H1 (cell line): ENCODE measurements at regions of chr6 and their contacts with region 1.

Region 1: GRCh38 chr6:3929281-3929798 is 80.2 kb downstream of the FAM50B start:
- DNase-seq: no peak
- H3K4me3 ChIP-seq: no peak overlapping the region
- H3K27ac ChIP-seq: no peak overlapping the region
- H3K4me1 ChIP-seq: no peaks in the 10 kb centered on the region
- H3K27me3 ChIP-seq: no peaks in the 10 kb centered on the region
- CTCF ChIP-seq: no peak
- EP300 ChIP-seq: no peak
- POLR2A ChIP-seq: no peak
- RAD21 ChIP-seq: no peak

Region 2: DNA sequence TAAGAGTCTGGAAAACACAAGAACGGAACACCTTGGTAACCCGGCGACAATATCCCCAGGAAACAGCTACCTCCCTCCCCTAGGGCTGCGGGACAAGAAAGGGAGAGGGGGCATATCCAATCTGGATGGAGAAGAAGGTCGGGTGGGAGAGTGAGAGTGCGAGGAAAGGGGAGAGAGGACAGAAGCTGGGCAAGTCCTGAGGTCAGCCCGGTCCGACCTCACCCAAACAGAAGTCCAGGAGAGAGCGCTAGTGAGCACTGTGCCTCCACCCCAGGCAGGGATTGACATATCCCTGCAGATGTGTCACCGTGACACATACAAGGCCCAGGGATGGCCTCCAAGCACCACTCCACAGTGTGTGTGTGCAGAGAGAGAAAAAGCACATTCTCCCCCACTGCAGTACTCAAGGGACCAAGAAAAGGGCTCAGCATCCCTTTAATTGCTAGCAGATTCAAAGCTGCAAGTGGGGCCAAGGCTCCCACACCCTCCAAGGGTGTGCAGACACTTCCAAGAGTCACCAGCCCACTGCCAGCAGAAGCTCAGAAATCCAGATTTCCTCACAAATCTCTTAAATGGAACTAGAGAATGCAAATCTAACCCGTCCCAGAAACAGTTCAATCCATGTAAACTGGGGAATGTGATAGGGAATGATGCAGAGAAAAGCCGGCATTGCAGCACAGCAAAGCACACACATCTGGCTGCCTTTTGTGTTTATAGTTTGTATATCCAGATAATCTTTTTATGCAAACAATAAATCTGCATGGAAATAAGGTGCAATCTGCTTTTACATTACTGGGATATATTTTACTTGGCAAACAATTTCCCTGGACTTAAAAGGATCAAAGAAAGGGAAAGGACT is 180.9 kb before region 1 on chr6:
- CTCF ChIA-PET with region 1: interaction called, 40 read pairs
- POLR2A ChIA-PET with region 1: no interaction called
- DNase-seq: peak in 1 of 2 experiments; percentile 81
- H3K4me3 ChIP-seq: no peak overlapping the region
- H3K27ac ChIP-seq: no peak overlapping the region
- H3K4me1 ChIP-seq: peaks cover 0 to 14% (median 5%) of the 10 kb centered on the region in 4 experiments; a peak in 5 of 7 replicates
- H3K27me3 ChIP-seq: peaks cover 12 to 45% (median 39%) of the 10 kb centered on the region in 4 experiments
- CTCF ChIP-seq: peak in 2 of 3 experiments; percentile 79 to 92; a peak in 3 of 4 replicates
- EP300 ChIP-seq: no peak
- POLR2A ChIP-seq: no peak
- RAD21 ChIP-seq: peak; percentile 72 to 80

Region 3: DNA sequence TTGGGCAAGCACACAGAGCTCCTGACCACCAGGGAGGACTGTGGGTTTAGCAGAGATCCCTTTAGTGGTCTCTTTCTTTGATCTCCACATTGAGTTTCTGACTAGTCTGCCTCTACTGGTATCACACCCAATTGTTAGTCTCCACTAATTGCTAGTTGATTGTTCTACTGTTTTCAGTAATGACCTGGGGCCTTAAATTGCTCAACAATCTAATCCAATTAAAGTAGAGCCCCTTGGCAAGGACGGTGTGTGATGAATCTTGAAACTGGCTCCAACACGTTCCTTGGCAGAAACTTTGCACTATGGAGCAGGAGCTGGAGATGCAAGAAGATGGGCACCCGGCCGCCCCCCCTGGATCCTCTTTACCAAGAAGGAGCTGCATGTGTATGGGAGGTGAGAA is 67.9 kb before region 1 on chr6:
- CTCF ChIA-PET with region 1: interaction called, 124 read pairs
- POLR2A ChIA-PET with region 1: no interaction called
- DNase-seq: no peak
- H3K4me3 ChIP-seq: no peak overlapping the region
- H3K27ac ChIP-seq: no peak overlapping the region
- H3K4me1 ChIP-seq: peaks cover 0 to 4% (median 0%) of the 10 kb centered on the region in 4 experiments; a peak in 2 of 7 replicates
- H3K27me3 ChIP-seq: no peaks in the 10 kb centered on the region
- CTCF ChIP-seq: no peak
- EP300 ChIP-seq: no peak
- POLR2A ChIP-seq: no peak
- RAD21 ChIP-seq: no peak

Region 4: GRCh38 chr6:3905945-3906845 is 23.1 kb before region 1 on chr6:
- CTCF ChIA-PET with region 1: interaction called, 15 read pairs
- POLR2A ChIA-PET with region 1: no interaction called
- DNase-seq: no peak
- H3K4me3 ChIP-seq: no peak overlapping the region; a peak in 1 of 8 replicates
- H3K27ac ChIP-seq: no peak overlapping the region
- H3K4me1 ChIP-seq: peaks cover 7 to 19% (median 14%) of the 10 kb centered on the region in 4 experiments
- H3K27me3 ChIP-seq: no peaks in the 10 kb centered on the region; a peak in 2 of 7 replicates
- CTCF ChIP-seq: no peak
- EP300 ChIP-seq: no peak
- POLR2A ChIP-seq: no peak
- RAD21 ChIP-seq: no peak

Region 5: DNA sequence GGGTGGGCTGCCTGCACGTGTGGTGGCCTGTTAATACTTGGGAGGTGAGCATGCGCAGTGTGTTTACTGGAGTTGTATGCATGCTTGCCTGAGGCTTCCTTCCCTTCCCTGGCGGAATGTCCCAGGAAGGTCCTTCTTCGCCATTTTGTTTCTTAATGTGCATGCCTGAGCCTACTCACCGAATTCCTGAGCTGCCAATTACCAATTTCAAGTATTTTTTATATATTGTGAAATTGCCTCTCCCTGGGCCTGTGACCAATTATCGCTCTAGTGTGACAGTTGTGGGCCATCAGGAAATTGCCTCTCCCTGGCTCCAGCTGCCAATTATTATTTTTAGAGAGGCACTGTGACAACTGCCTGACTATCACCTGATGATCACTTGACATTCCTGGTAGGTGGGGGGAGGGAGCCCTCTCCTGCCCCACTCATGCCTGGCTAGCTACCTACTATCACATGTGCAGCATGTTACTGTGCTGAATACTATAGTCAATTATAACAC is 10.2 kb before region 1 on chr6:
- CTCF ChIA-PET with region 1: interaction called, 20 read pairs
- POLR2A ChIA-PET with region 1: no interaction called
- DNase-seq: no peak
- H3K4me3 ChIP-seq: no peak overlapping the region
- H3K27ac ChIP-seq: no peak overlapping the region
- H3K4me1 ChIP-seq: peaks cover 0 to 4% (median 0%) of the 10 kb centered on the region in 4 experiments; a peak in 1 of 7 replicates
- H3K27me3 ChIP-seq: no peaks in the 10 kb centered on the region
- CTCF ChIP-seq: no peak
- EP300 ChIP-seq: no peak
- POLR2A ChIP-seq: no peak
- RAD21 ChIP-seq: no peak

Region 6: DNA sequence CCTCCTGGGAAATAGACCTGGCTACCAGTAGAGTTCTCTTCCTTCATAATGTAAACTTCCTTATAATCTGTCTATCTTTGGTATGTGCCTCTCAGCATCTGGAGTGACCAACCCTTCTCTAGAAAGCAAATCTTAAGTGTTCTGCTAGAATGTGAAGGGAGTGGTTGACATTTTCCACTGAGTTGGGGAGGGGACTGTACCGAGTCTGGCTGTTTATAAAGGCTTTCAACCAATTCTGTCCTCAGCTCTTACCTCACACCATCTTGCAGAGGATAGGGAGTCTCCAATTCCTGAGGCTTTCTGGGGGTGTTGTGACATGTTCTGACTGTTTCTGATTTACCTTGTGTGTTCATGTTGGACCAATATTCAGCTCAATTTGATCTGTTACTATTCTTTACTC is 110.0 kb after region 1 on chr6:
- CTCF ChIA-PET with region 1: no interaction called
- POLR2A ChIA-PET with region 1: no interaction called
- DNase-seq: no peak
- H3K4me3 ChIP-seq: no peak overlapping the region
- H3K27ac ChIP-seq: no peak overlapping the region
- H3K4me1 ChIP-seq: no peaks in the 10 kb centered on the region
- H3K27me3 ChIP-seq: no peaks in the 10 kb centered on the region
- CTCF ChIP-seq: no peak
- EP300 ChIP-seq: no peak
- POLR2A ChIP-seq: no peak
- RAD21 ChIP-seq: no peak

Region 7: GRCh38 chr6:4299476-4299875 is 370.1 kb after region 1 on chr6:
- CTCF ChIA-PET with region 1: no interaction called
- POLR2A ChIA-PET with region 1: no interaction called
- DNase-seq: no peak
- H3K4me3 ChIP-seq: no peak overlapping the region
- H3K27ac ChIP-seq: no peak overlapping the region
- H3K4me1 ChIP-seq: no peaks in the 10 kb centered on the region
- H3K27me3 ChIP-seq: no peaks in the 10 kb centered on the region
- CTCF ChIP-seq: no peak
- EP300 ChIP-seq: no peak
- POLR2A ChIP-seq: no peak
- RAD21 ChIP-seq: no peak